ENCODE measurements at regions of chr10 and their contacts with region 1.

Region 1: DNA sequence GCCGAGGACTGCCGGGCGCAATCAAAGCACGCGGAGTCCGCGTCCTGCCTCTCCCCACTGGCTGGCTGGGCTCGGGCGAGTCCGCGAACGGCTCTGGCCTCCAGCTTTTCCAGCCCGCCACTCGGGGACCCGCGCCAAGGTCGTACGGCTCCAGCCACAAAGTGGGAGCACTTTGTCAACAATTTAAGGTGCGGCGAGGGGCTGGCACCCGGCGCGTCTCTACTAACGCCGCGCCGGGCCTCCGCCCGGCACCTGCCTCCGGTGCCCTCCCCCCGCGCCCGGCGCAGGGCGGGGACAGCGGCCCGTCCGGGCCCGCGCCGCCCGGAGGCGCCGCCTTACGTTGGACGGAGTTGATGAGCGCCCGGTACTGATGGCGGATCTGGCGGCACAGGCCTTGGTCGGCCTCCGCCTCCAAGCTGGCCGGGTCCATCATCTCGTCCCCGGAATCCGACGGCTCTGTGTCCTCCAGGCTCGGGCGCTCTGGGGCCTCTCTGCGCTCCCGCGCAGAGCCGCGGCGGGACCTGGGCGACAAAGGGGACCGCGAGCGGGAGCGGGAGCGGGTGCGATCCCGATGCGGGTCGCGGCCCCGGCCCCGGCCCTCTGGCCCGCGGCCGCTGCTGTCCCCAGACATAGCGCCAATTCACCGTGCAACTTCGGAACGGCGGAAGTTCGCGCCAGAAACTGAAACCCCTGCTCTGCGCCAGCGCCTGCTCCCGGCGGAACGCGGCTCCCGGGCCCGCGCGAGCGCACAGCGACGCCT is at the start of gene NSMCE4A:
- DNase-seq: peak; percentile 68 to 77
- ATAC-seq: peak; percentile 88 to 89
- H3K4me3 ChIP-seq: peak within 1 kb of the TSS; percentile 71 to 91 (median 81)
- H3K27ac ChIP-seq: peak within 1 kb of the TSS; percentile 94 to 99 (median 96)
- H3K4me1 ChIP-seq: peaks cover 16 to 19% of the 10 kb centered on the region in 2 donors
- H3K27me3 ChIP-seq: no peaks in the 10 kb centered on the region
- CTCF ChIP-seq: peak in 4 of 5 experiments; percentile 66 to 80 (median 68)
- POLR2A ChIP-seq: peak; percentile 87 to 92
- total RNA-seq, gene NSMCE4A: 20.1 to 37.7 (median 26.9) TPM

Region 2: GRCh38 chr10:121734589-121735045 is 240.1 kb before region 1 on chr10:
- in situ Hi-C with region 1: no loop called
- intact Hi-C with region 1: no loop called
- DNase-seq: no peak
- ATAC-seq: no peak
- H3K4me3 ChIP-seq: no peak overlapping the region
- H3K27ac ChIP-seq: no peak overlapping the region
- H3K4me1 ChIP-seq: no peaks in the 10 kb centered on the region
- H3K27me3 ChIP-seq: no peaks in the 10 kb centered on the region
- CTCF ChIP-seq: peak in 4 of 5 experiments; percentile 22 to 68 (median 38)
- POLR2A ChIP-seq: no peak

Region 3: DNA sequence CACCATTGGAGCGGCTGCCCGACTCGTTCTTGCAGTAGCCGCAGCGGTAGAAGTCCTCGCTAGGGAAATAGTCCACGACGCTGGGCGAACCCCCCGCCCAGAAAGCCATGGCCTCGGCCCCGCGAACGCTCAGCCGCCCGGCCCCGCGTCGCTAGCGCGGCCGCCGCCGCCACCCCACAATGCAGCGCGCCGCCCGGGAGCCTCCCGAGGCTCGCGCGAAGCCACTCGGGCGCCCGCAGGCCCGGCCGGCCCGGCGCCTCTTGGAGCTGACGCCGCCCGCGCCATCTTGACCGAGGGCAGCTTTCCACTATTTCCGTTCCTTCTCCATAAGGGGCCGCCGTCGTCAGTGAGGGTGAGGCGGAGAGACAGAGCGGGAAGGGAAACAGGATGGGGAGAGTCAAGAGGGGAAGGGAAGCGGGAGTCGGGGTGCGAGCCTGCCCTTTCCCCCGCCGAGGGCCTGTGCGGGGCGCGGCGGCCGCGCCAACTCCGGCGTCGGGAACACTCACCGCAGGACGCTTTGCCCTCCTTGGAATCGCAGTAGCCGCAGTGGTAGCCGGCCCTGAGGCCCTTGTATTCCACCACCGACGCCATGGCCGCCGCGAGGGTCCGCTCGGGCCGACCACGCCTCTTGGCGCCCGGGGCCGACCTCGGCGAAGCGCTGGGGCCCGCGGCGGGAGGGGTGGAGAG is 46.7 kb before region 1 on chr10 and contains the start of gene ATE1:
- in situ Hi-C with region 1: no loop called
- intact Hi-C with region 1: loop called (anchors 1 kb)
- DNase-seq: peak; percentile 87 to 90
- ATAC-seq: peak; percentile 90
- H3K4me3 ChIP-seq: peak within 1 kb of the TSS; percentile 77 to 99 (median 86)
- H3K27ac ChIP-seq: peak within 1 kb of the TSS; percentile 90 to 99 (median 94)
- H3K4me1 ChIP-seq: peaks cover 18 to 21% of the 10 kb centered on the region in 2 donors
- H3K27me3 ChIP-seq: no peaks in the 10 kb centered on the region
- CTCF ChIP-seq: peak in 3 of 5 experiments; percentile 3 to 11 (median 6)
- POLR2A ChIP-seq: peak; percentile 69 to 84
- total RNA-seq, gene ATE1: 34.3 to 57.6 (median 39.4) TPM

Region 4: GRCh38 chr10:122078965-122079795 is 104.5 kb after region 1 on chr10:
- in situ Hi-C with region 1: no loop called
- intact Hi-C with region 1: no loop called
- DNase-seq: no peak
- ATAC-seq: peak; percentile 59 to 68
- H3K4me3 ChIP-seq: peak overlapping the region in 1 of 4 donors; percentile 10
- H3K27ac ChIP-seq: peak overlapping the region; percentile 51 to 84 (median 64)
- H3K4me1 ChIP-seq: peaks cover 18 to 32% of the 10 kb centered on the region in 2 donors
- H3K27me3 ChIP-seq: no peaks in the 10 kb centered on the region
- CTCF ChIP-seq: no peak
- POLR2A ChIP-seq: no peak